Endothelial cell of umbilical vein (primary cell): ENCODE measurements at regions of chr17 and their contacts with region 1.

Region 1: DNA sequence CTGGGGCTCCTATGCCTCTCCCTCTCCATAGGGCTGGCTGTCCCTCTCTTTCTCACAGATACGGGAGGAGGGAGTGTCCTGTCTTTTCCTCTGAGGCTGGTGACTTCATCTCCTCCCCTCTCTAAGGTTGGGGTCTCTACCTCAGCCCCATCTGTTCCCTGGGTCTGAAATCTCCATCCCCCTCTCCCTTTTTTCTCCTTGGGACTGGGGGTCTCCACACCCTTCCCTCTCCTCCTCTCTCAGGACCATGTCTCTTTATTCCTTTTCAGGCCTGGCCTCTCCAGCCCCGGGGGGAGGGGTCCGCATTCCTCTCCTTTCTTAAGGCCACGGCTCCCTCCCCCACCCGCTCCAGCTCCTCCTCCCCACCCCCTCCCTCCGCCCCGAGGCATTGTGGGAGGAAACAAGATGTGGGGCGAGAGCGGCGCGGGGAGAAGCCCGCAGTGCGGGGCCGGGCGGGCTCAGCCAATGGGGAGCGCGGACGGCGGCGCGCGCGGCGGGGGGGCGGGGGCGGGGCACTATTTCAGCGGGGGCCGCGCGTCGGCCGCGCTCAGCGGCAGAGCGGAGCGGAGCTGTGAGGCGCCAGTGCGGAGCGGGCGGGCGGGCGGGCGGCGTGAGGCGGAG is at the start of gene DYNLL2:
- DNase-seq: peak; percentile 78
- H3K4me3 ChIP-seq: peak within 1 kb of the TSS; percentile 53 to 97 (median 61)
- H3K27ac ChIP-seq: peak within 1 kb of the TSS; percentile 37
- H3K4me1 ChIP-seq: peaks cover 12% of the 10 kb centered on the region
- H3K27me3 ChIP-seq: peaks cover 10 to 15% of the 10 kb centered on the region in 2 experiments
- CTCF ChIP-seq: no peak
- POLR2A ChIP-seq: no peak
- total RNA-seq, gene DYNLL2: 17.1 and 19.0 TPM in 2 replicates

Region 2: GRCh38 chr17:57084802-57085447 is 998.1 kb before region 1 on chr17 and contains the start of gene AKAP1:
- CTCF ChIA-PET with region 1: no interaction called
- POLR2A ChIA-PET with region 1: no interaction called
- dilution Hi-C with region 1: no loop called
- intact Hi-C with region 1: loop called (anchors 2 kb)
- DNase-seq: peak; percentile 95
- H3K4me3 ChIP-seq: peak within 1 kb of the TSS; percentile 45 to 99 (median 68)
- H3K27ac ChIP-seq: peak within 1 kb of the TSS; percentile 88
- H3K4me1 ChIP-seq: peaks cover 8% of the 10 kb centered on the region
- H3K27me3 ChIP-seq: peaks cover 0 to 1% of the 10 kb centered on the region in 2 experiments
- CTCF ChIP-seq: peak in 1 of 2 donors; percentile 29
- POLR2A ChIP-seq: peak; percentile 95
- total RNA-seq, gene AKAP1: 20.9 and 23.9 TPM in 2 replicates

Region 3: GRCh38 chr17:57849874-57850754 is 232.9 kb before region 1 on chr17 and contains the start of gene MRPS23:
- CTCF ChIA-PET with region 1: no interaction called
- POLR2A ChIA-PET with region 1: interaction called, 8 read pairs
- dilution Hi-C with region 1: no loop called
- intact Hi-C with region 1: loop called (anchors 2 kb)
- DNase-seq: peak; percentile 99
- H3K4me3 ChIP-seq: peak within 1 kb of the TSS; percentile 50 to 81 (median 52)
- H3K27ac ChIP-seq: peak within 1 kb of the TSS; percentile 66
- H3K4me1 ChIP-seq: peaks cover 14% of the 10 kb centered on the region
- H3K27me3 ChIP-seq: no peaks in the 10 kb centered on the region
- CTCF ChIP-seq: no peak
- POLR2A ChIP-seq: peak; percentile 80
- total RNA-seq, gene MRPS23: 40.7 and 46.2 TPM in 2 replicates

Region 4: GRCh38 chr17:57868007-57868909 is 214.7 kb before region 1 on chr17:
- CTCF ChIA-PET with region 1: no interaction called
- POLR2A ChIA-PET with region 1: no interaction called
- dilution Hi-C with region 1: no loop called
- intact Hi-C with region 1: loop called (anchors 5 kb)
- DNase-seq: peak; percentile 91
- H3K4me3 ChIP-seq: no peak overlapping the region
- H3K27ac ChIP-seq: peak overlapping the region; percentile 44
- H3K4me1 ChIP-seq: peaks cover 35% of the 10 kb centered on the region
- H3K27me3 ChIP-seq: no peaks in the 10 kb centered on the region
- CTCF ChIP-seq: peak in 1 of 2 donors; percentile 53
- POLR2A ChIP-seq: no peak

Region 5: GRCh38 chr17:58006924-58007780 is 75.8 kb before region 1 on chr17 and contains the start of gene SRSF1:
- CTCF ChIA-PET with region 1: interaction called, 8 read pairs
- POLR2A ChIA-PET with region 1: interaction called, 19 read pairs
- dilution Hi-C with region 1: no loop called
- intact Hi-C with region 1: loop called (anchors 1 kb)
- DNase-seq: peak; percentile 98
- H3K4me3 ChIP-seq: peak within 1 kb of the TSS; percentile 39 to 95 (median 85)
- H3K27ac ChIP-seq: peak within 1 kb of the TSS; percentile 67
- H3K4me1 ChIP-seq: peaks cover 36% of the 10 kb centered on the region
- H3K27me3 ChIP-seq: no peaks in the 10 kb centered on the region
- CTCF ChIP-seq: no peak
- POLR2A ChIP-seq: peak; percentile 97
- total RNA-seq, gene SRSF1: 309 and 316 TPM in 2 replicates

Region 6: DNA sequence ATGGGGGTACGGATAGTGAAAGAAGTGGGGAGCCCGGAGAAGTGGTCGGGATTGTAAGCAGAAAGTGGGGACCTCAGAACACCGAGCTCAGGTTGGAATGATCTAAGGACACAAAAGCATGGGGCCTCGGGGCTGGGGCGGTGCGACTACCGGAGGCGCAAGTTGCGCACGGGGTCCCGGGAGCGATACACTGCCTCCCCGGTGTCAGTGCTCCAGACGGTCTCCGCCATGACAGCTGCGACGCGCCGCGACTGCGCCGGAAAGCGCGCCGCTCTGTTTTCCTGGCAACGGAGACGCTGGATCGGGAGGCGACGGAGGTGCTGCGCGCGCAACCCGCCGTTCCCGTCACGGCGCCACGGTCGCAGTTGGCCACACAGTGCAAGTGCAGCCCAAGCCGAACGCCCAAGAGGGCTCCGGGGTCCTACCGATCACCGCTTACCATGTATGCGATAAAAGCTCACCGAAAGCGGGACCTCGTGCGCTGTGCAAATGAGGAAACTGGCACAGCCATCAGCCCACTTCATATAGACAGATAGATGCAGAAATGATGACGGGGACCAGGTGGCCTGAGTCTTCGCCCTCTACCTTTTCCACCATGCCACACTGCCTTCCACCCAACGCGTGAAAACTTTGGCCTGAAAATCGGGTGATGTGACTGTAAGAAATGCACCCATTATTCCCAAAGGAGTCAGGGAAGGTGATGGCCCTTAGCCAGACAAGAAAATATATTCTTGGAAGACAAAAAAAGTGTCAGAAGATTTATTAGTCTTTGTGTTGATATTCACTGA is 136.2 kb after region 1 on chr17 and contains the start of gene MKS1:
- CTCF ChIA-PET with region 1: no interaction called
- POLR2A ChIA-PET with region 1: no interaction called
- dilution Hi-C with region 1: no loop called
- intact Hi-C with region 1: loop called (anchors 2 kb)
- DNase-seq: peak; percentile 94
- H3K4me3 ChIP-seq: peak within 1 kb of the TSS; percentile 35 to 74 (median 66)
- H3K27ac ChIP-seq: peak within 1 kb of the TSS; percentile 48
- H3K4me1 ChIP-seq: peaks cover 16% of the 10 kb centered on the region
- H3K27me3 ChIP-seq: no peaks in the 10 kb centered on the region
- CTCF ChIP-seq: peak; percentile 45 to 75
- POLR2A ChIP-seq: peak; percentile 87
- total RNA-seq, gene MKS1: 12.2 and 16.3 TPM in 2 replicates